H1 (cell line): ENCODE measurements at regions of chr16 and their contacts with region 1.

Region 1: DNA sequence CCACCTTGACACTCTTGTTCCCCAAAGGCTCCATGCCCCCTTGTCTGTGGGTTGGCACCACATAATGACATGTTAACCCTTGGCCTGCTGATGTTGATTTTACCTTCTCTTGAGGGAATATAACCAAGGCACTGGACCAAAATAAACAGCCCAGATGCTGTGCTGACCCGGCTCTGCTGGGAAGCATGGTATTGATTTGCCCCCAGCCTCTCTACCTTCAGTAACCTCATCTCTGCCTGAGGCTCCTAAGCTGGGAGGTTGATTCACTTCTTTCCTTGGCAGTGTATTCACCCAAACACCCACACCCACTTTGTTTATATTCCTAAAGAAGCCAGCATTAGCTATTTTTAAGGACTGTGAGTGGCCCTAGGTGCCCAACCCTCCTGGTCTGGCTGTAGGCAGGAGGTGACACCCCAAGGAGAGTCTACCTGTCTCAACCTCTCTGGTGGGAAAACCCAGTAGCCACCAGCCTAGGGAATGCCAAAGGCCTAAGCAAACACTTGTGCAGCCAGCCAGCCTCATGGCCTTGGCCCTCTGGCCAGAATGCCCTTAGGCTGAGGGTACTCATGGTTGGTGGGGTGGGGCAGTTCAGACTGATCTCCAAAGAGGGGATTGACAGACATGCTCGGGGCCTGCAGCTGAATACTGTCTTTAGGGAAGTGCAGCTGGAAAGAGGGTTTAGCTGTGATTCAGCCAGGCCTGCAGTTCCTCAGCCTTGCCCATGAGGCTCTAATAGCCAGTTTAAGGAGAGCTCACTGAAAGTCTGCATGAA is 42.7 kb downstream of the GNAO1 start:
- DNase-seq: no peak
- H3K4me3 ChIP-seq: no peak overlapping the region
- H3K27ac ChIP-seq: no peak overlapping the region
- H3K4me1 ChIP-seq: peaks cover 0 to 5% (median 2%) of the 10 kb centered on the region in 4 experiments; a peak in 3 of 7 replicates
- H3K27me3 ChIP-seq: no peaks in the 10 kb centered on the region
- CTCF ChIP-seq: no peak
- EP300 ChIP-seq: no peak
- POLR2A ChIP-seq: no peak
- RAD21 ChIP-seq: no peak

Region 2: DNA sequence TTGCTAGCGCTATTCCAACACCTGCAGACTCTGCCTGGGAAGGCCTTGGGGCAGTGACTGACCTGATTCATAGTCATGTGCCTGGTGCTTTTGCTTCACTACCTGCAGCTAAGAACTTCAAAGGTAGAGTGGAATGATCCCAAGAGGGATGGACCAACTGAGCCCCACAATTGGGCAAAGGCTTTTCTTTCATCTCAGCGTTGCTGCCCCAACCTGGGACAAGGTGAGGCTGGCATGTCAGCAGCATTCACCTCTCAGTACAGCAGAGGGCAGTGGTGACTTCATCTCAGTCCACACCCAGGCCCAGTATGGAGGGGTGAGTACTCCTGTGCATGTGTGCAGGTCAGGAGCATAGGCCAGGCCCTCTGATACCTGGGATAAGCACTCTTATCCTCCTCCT is 192.3 kb before region 1 on chr16:
- CTCF ChIA-PET with region 1: no interaction called
- POLR2A ChIA-PET with region 1: no interaction called
- DNase-seq: peak; percentile 31 to 67
- H3K4me3 ChIP-seq: no peak overlapping the region
- H3K27ac ChIP-seq: no peak overlapping the region
- H3K4me1 ChIP-seq: no peaks in the 10 kb centered on the region
- H3K27me3 ChIP-seq: no peaks in the 10 kb centered on the region; a peak in 2 of 7 replicates
- CTCF ChIP-seq: peak; percentile 89 to 95 (median 90)
- EP300 ChIP-seq: no peak
- POLR2A ChIP-seq: no peak
- RAD21 ChIP-seq: peak; percentile 95

Region 3: GRCh38 chr16:56203052-56203451 is 30.9 kb before region 1 on chr16:
- CTCF ChIA-PET with region 1: interaction called, 13 read pairs
- POLR2A ChIA-PET with region 1: no interaction called
- DNase-seq: peak in 1 of 2 experiments; percentile 53
- H3K4me3 ChIP-seq: no peak overlapping the region
- H3K27ac ChIP-seq: no peak overlapping the region
- H3K4me1 ChIP-seq: peaks cover 0 to 4% (median 3%) of the 10 kb centered on the region in 4 experiments; a peak in 4 of 7 replicates
- H3K27me3 ChIP-seq: no peaks in the 10 kb centered on the region
- CTCF ChIP-seq: peak; percentile 44 to 49 (median 48)
- EP300 ChIP-seq: no peak
- POLR2A ChIP-seq: no peak
- RAD21 ChIP-seq: peak; percentile 49 to 64; a peak in 3 of 4 replicates

Region 4: DNA sequence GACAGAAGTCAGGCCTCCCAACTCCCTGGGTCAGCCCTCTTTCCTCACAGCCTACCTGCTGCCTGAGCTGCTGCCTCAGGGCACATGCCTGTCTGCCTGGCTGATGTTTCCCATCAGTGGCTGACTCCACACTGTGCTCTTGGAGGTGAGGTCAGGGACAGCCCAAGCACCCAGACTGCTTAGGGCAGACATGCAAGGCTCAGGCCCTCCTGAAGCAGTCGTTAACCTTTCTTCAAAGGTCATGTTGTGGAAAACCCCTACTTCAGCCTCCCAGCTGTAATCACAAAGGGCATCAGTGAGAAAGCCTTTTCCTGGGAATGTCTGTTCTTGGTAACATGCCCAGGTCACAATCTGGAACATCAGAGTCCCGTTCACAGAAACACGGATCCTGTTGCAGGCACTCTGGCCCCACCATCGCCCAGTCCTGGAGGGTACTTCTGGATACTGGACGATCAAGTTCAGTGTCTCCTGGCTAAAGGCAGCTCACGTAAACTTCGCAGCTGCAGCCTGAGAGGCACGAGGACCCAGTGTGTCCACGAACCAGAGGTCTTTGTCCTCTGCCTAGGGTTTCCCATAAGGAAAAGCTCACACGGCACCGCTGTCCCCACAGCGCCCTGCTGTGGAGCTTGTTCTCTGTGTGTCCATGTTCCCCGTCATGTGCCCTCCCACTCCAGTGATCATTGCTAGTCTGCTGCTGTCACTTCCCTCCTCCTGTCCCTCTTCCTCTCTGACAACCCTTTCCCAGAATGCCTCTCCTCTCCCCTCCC is 12.3 kb after region 1 on chr16:
- CTCF ChIA-PET with region 1: interaction called, 12 read pairs
- POLR2A ChIA-PET with region 1: no interaction called
- DNase-seq: peak in 1 of 2 experiments; percentile 38
- H3K4me3 ChIP-seq: no peak overlapping the region
- H3K27ac ChIP-seq: no peak overlapping the region
- H3K4me1 ChIP-seq: peaks cover 2 to 9% (median 5%) of the 10 kb centered on the region in 4 experiments; a peak in 5 of 7 replicates
- H3K27me3 ChIP-seq: no peaks in the 10 kb centered on the region; a peak in 1 of 7 replicates
- CTCF ChIP-seq: no peak
- EP300 ChIP-seq: no peak
- POLR2A ChIP-seq: no peak
- RAD21 ChIP-seq: 0 out of 4 replicates have a peak, but pooled peaks have one; percentile 8 to 10

Region 5: GRCh38 chr16:56343661-56344526 is 109.9 kb after region 1 on chr16:
- CTCF ChIA-PET with region 1: no interaction called
- POLR2A ChIA-PET with region 1: no interaction called
- DNase-seq: no peak
- H3K4me3 ChIP-seq: no peak overlapping the region
- H3K27ac ChIP-seq: no peak overlapping the region
- H3K4me1 ChIP-seq: no peaks in the 10 kb centered on the region
- H3K27me3 ChIP-seq: no peaks in the 10 kb centered on the region
- CTCF ChIP-seq: no peak
- EP300 ChIP-seq: no peak
- POLR2A ChIP-seq: no peak
- RAD21 ChIP-seq: no peak